ENCODE measurements at regions of chr3 and their contacts with region 1.

Region 1: DNA sequence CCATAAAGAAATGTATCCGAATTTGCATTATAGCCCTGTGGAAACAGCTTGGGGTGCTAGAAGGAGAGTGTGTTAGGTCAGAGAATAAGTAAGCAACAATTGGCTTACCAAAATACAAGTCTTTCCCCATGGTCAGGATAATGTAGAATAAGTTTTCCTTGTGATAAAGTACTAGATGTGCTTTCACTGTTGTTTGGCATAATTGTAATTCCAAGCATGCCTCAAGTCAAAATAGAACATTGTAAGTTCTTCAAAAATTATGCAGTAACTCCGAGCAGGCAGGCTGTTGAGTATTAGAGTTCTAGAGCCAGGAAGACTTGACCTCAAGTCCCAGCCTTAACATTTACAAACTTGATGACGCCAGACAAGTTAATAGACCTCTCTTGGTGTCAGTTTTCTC is 242.0 kb downstream of the TUSC7 start:
- DNase-seq: no peak
- H3K4me3 ChIP-seq: no peak overlapping the region
- H3K27ac ChIP-seq: no peak overlapping the region
- H3K4me1 ChIP-seq: no peaks in the 10 kb centered on the region
- H3K27me3 ChIP-seq: no peaks in the 10 kb centered on the region
- CTCF ChIP-seq: no peak

Region 2: DNA sequence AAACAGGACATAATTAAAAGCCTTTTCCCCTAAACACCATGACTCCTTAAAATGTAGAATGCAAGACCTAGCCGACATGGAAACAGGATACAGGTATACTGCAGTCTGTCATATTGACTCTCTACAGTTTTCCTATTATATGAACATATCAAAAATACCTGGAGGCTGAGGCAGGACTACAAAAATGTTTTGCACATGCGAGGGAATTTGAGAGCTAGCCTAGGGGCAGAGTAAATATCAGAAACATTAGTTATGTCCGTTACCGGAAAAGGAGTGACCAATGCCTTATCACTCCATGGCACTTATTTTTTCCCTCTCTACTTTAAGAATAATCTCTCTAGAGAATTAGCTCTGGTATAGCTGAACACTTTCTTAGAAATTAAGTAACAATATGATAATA is 490.2 kb after region 1 on chr3:
- CTCF ChIA-PET with region 1: no interaction called
- POLR2A ChIA-PET with region 1: interaction called, 10 read pairs
- intact Hi-C with region 1: no loop called
- DNase-seq: no peak
- H3K4me3 ChIP-seq: no peak overlapping the region
- H3K27ac ChIP-seq: no peak overlapping the region
- H3K4me1 ChIP-seq: no peaks in the 10 kb centered on the region
- H3K27me3 ChIP-seq: no peaks in the 10 kb centered on the region
- CTCF ChIP-seq: no peak